PC-9 (cell line): ENCODE measurements at regions of chr2 and their contacts with region 1.

Region 1: DNA sequence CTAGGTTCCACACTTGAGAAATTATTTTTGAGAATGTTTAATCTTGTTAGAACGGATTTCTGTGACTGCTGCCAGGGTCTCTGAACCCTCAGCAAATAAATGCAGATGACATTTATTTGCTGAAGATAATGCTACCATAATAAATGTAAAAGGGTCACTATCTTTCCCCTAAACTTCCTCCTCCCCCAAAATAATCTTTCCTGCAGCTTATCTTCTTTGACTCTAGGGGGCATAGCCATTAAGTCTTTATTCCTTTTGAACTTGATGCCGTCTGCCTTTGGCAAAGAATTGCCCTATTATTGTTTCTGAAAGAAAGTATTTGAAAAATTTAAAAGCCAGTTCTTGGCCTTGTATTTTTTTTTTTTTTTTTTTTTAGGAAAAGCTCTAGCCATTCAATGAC is 63.6 kb upstream of the ACSL3 start:
- DNase-seq: peak in 1 of 2 experiments; percentile 68
- H3K4me3 ChIP-seq: no peak overlapping the region
- H3K27ac ChIP-seq: no peak overlapping the region
- H3K4me1 ChIP-seq: peaks cover 18% of the 10 kb centered on the region
- H3K27me3 ChIP-seq: no peaks in the 10 kb centered on the region
- CTCF ChIP-seq: peak; percentile 74

Region 2: DNA sequence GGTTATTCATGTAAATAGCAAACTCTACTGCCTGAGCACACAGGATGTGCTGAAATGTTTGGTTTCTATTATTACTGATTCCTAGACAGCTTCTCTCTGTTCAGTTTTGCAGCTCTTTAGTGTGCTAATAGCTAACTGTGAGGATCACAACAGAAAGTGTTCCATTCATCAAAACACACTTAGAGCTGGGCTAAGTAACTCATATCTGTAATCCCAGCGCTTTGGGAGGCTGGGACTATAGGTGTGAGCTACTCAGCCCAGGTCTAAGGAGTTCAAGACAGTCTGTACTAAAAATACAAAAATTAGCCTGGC is 62.6 kb before region 1 on chr2:
- CTCF ChIA-PET with region 1: no interaction called
- POLR2A ChIA-PET with region 1: interaction called, 11 read pairs
- intact Hi-C with region 1: no loop called
- DNase-seq: no peak
- H3K4me3 ChIP-seq: no peak overlapping the region
- H3K27ac ChIP-seq: no peak overlapping the region
- H3K4me1 ChIP-seq: peaks cover 20% of the 10 kb centered on the region
- H3K27me3 ChIP-seq: no peaks in the 10 kb centered on the region
- CTCF ChIP-seq: no peak

Region 3: GRCh38 chr2:222760301-222760897 is 36.9 kb before region 1 on chr2:
- CTCF ChIA-PET with region 1: interaction called, 10 read pairs
- POLR2A ChIA-PET with region 1: no interaction called
- intact Hi-C with region 1: no loop called
- DNase-seq: no peak
- H3K4me3 ChIP-seq: no peak overlapping the region
- H3K27ac ChIP-seq: no peak overlapping the region
- H3K4me1 ChIP-seq: peaks cover 24% of the 10 kb centered on the region
- H3K27me3 ChIP-seq: no peaks in the 10 kb centered on the region
- CTCF ChIP-seq: no peak

Region 4: DNA sequence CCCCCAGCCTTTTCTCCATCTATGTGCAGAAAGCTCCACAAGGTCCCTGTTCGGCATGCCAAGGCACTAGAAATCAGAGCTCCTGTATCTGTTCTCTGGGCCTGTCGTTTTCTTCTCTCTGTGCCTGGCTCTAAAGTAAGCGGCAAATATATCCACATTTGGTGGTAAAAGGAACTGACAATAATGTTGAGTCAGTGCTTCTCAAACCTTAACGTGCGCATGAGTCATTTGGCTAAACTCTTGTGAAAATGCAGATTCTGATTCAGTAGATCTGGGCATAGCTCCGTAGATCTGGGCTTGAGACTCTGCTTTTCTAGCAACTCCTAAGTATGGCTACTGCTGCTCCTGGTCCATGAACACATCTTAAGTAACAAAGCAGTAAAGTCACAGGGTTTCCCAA is 47.1 kb after region 1 on chr2:
- CTCF ChIA-PET with region 1: interaction called, 16 read pairs
- POLR2A ChIA-PET with region 1: no interaction called
- intact Hi-C with region 1: no loop called
- DNase-seq: peak in 1 of 2 experiments; percentile 79
- H3K4me3 ChIP-seq: peak overlapping the region; percentile 6; the same call in 1 of the 2 replicates
- H3K27ac ChIP-seq: peak overlapping the region; percentile 64
- H3K4me1 ChIP-seq: peaks cover 88% of the 10 kb centered on the region
- H3K27me3 ChIP-seq: no peaks in the 10 kb centered on the region
- CTCF ChIP-seq: no peak

Region 5: DNA sequence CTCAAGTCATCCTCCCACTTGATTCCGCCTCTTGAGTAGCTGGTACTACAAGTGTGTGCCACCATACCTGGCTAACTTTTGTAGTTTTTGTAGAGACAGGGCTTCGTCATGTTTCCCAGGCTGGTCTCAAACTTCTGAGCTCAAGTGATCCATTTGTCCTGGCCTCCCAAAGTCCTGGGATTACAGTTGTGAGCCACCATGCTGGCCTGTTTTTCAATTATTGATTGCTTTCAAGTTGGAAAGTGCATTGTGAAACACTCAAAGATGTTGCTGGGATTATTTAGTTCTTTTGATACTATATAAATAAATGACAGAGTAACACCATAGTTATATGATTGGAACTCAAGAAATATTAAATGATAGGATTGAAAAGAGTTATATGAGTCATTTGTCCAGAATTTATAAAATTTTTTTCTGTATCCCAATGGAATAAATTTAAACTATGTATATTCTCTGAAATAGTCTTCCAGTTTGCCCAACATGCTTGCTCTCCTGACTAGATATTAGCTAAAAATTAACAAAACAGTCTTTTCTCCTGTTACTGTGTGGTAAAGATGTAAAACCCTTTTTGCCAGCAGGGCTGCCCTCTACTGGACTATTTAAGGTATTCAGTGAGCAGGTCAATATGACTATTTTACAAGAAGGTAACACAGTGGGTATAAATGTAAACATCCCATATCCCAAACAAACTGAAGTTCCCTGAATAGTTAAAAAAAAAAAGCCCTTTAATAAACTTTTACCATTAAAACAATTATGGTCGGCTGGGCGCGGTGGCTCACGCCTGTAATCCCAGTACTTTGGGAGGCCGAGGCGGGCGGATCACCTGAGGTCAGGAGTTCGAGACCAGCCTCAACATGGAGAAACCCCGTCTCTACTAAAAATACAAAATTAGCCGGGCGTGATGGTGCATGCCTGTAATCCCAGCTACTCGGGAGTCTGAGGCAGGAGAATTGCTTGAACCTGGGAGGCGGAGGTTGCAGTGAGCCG is 106.3 kb after region 1 on chr2:
- CTCF ChIA-PET with region 1: interaction called, 8 read pairs
- POLR2A ChIA-PET with region 1: no interaction called
- intact Hi-C with region 1: loop called (anchors 1 kb)
- DNase-seq: peak; percentile 48 to 68
- H3K4me3 ChIP-seq: no peak overlapping the region
- H3K27ac ChIP-seq: 0 out of 2 replicates have a peak overlapping the region, but pooled peaks have one; percentile 7
- H3K4me1 ChIP-seq: peaks cover 29% of the 10 kb centered on the region
- H3K27me3 ChIP-seq: no peaks in the 10 kb centered on the region
- CTCF ChIP-seq: peak; percentile 99

Region 6: GRCh38 chr2:222930862-222931261 is 133.6 kb after region 1 on chr2:
- CTCF ChIA-PET with region 1: no interaction called
- POLR2A ChIA-PET with region 1: no interaction called
- intact Hi-C with region 1: no loop called
- DNase-seq: no peak
- H3K4me3 ChIP-seq: no peak overlapping the region
- H3K27ac ChIP-seq: no peak overlapping the region
- H3K4me1 ChIP-seq: no peaks in the 10 kb centered on the region
- H3K27me3 ChIP-seq: no peaks in the 10 kb centered on the region
- CTCF ChIP-seq: no peak